ENCODE measurements at regions of chr7 and their contacts with region 1.

Region 1: DNA sequence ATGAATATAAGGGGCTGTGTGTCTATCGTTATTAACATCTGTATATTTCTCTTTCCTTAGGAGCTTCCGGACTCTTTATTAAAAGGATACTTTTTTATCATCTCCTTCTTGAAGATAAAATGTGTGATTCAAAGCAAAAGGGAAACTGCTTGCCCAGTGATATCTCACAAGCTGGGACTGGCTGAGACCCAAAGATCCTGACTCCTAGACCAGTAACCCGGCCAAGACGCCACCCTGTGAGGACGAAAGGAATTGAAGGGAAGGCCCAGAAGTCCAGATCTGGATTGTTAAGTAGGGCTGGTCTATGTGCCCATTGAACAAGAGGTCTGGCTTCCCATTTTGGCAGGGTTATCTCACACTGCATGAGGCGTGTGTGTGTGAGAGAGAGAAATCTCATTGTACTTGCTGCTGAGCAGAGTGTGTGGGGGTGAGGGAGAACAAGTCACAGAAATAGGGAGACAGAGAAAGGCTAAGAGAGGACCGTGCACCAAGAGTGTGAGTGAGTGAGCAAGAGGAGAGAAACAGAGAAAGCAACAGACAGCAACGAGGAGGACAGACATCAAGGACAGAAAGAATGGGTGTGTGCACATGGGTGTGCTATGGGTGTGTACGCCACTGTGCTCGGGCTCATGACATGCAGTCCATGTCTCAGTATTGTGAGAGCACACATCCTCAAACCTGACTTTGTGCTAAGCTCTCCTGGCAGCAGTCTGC is 75.4 kb downstream of the PLXNA4 start:
- DNase-seq: peak; percentile 95
- H3K4me3 ChIP-seq: no peak overlapping the region
- H3K27ac ChIP-seq: peak overlapping the region; percentile 89
- H3K4me1 ChIP-seq: peaks cover 35% of the 10 kb centered on the region
- H3K27me3 ChIP-seq: no peaks in the 10 kb centered on the region
- CTCF ChIP-seq: peak; percentile 70 to 71
- POLR2A ChIP-seq: no peak

Region 2: DNA sequence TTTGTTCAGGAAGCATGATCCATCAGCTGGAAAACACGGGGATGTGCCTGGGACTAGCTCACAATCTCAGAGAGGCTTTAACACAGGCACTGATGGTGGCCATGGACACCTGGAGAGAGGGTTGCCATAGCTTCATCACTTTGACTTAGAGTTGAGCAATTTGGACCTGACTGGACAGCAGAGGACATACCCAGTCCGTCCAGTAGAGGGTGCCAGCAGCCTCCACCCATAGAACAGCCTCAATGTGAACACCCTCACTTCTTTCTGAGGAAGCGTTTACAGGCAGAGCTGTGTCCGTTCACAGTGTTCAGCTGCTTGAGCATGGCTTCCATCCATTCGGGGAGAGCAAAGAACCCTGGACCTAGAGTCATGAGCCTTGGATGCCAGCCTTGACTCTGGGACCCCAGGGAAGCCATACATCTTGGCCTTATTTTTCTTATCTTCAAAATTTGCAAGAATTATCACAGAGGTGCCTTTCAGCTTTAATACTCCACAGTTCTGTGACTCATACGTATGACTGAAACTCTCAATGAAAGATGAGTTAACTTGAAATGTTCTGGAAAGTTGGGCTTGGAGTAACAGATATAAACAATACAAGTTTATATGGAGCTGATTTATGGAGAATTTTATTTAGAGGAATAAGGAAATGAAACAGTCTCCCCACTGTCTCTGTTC is 641.6 kb before region 1 on chr7:
- CTCF ChIA-PET with region 1: interaction called, 4 read pairs
- POLR2A ChIA-PET with region 1: no interaction called
- dilution Hi-C with region 1: no loop called
- intact Hi-C with region 1: loop called (anchors 1 kb)
- DNase-seq: peak; percentile 82
- H3K4me3 ChIP-seq: no peak overlapping the region
- H3K27ac ChIP-seq: no peak overlapping the region
- H3K4me1 ChIP-seq: peaks cover 17% of the 10 kb centered on the region
- H3K27me3 ChIP-seq: peaks cover 5 to 12% of the 10 kb centered on the region in 2 experiments
- CTCF ChIP-seq: peak; percentile 82 to 92
- POLR2A ChIP-seq: no peak

Region 3: GRCh38 chr7:132145466-132145865 is 355.4 kb before region 1 on chr7:
- CTCF ChIA-PET with region 1: no interaction called
- POLR2A ChIA-PET with region 1: no interaction called
- dilution Hi-C with region 1: no loop called
- intact Hi-C with region 1: loop called (anchors 5 kb)
- DNase-seq: peak; percentile 88
- H3K4me3 ChIP-seq: no peak overlapping the region
- H3K27ac ChIP-seq: peak overlapping the region; percentile 49
- H3K4me1 ChIP-seq: peaks cover 8% of the 10 kb centered on the region
- H3K27me3 ChIP-seq: no peaks in the 10 kb centered on the region
- CTCF ChIP-seq: peak in 1 of 2 donors; percentile 18
- POLR2A ChIP-seq: no peak

Region 4: GRCh38 chr7:132351954-132352499 is 148.9 kb before region 1 on chr7:
- CTCF ChIA-PET with region 1: no interaction called
- POLR2A ChIA-PET with region 1: no interaction called
- dilution Hi-C with region 1: no loop called
- intact Hi-C with region 1: no loop called
- DNase-seq: no peak
- H3K4me3 ChIP-seq: no peak overlapping the region
- H3K27ac ChIP-seq: no peak overlapping the region
- H3K4me1 ChIP-seq: peaks cover 12% of the 10 kb centered on the region
- H3K27me3 ChIP-seq: no peaks in the 10 kb centered on the region
- CTCF ChIP-seq: no peak
- POLR2A ChIP-seq: no peak

Region 5: DNA sequence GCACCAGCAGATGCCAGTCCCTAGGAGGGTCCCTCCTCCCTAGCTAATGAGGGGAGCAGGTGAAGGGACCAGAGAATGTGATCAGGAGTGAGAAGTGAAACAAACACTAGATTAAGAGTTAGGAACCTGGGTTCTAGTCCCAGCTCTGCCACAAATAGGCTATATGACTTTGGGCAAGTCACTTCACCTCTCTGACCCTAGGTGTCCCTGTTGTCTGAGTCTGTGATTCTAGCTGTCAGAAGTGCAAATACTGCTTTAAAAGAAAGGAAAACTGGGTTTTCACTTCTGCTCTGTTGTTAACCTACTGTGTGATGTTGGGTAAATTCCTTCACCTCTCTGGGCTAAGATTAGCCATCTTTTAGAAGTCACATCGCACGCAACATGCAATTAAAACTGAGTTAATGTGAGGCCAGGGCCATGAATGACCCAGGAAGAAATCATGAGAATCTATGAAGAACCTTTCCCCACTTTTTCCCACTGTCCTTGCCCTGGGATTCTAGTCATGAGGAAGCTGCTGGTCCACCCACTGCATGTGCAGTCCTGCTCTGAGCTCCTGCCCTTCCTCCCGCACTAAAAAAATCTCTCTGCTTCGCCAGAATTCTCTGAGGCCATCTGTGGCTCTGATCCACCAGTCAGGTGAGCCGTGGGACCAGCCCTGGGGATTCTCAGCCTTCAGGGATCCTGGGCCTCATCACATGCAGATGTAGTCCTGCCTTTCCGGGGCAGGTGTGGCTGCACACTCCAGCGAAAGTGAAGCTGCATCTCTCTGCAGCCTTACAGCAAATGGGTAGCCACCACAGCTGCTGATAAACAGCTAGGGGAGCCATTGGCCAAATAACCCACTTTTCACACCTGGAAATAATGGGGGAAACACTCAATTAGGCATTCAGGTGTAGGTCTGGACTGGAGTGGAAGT is 106.3 kb before region 1 on chr7:
- CTCF ChIA-PET with region 1: interaction called, 19 read pairs
- POLR2A ChIA-PET with region 1: no interaction called
- dilution Hi-C with region 1: no loop called
- intact Hi-C with region 1: loop called (anchors 1 kb)
- DNase-seq: no peak
- H3K4me3 ChIP-seq: no peak overlapping the region
- H3K27ac ChIP-seq: no peak overlapping the region
- H3K4me1 ChIP-seq: peaks cover 5% of the 10 kb centered on the region
- H3K27me3 ChIP-seq: no peaks in the 10 kb centered on the region
- CTCF ChIP-seq: peak; percentile 5 to 14
- POLR2A ChIP-seq: no peak

Region 6: DNA sequence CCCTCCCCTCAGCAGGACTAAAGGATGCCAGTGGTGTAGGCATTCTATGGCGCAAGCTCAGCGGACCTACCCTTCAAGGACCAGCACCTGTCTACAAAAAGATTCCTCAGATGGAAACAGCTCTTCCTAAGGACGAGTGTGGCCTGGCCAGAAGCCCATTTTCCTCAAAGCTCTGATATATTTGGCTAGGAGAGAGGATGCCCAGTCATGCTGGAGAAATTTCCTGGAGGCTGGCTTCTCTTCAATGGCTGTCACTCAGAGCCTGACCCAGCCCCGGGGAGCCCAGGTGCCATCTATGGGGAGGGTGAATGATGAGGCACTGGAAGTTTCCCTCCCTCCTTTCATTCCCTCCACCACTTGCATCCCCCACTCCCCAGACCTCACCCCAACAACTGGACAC is 36.1 kb before region 1 on chr7:
- CTCF ChIA-PET with region 1: interaction called, 4 read pairs
- POLR2A ChIA-PET with region 1: no interaction called
- dilution Hi-C with region 1: no loop called
- intact Hi-C with region 1: loop called (anchors 1 kb)
- DNase-seq: peak; percentile 94
- H3K4me3 ChIP-seq: no peak overlapping the region
- H3K27ac ChIP-seq: peak overlapping the region; percentile 76
- H3K4me1 ChIP-seq: peaks cover 47% of the 10 kb centered on the region
- H3K27me3 ChIP-seq: no peaks in the 10 kb centered on the region
- CTCF ChIP-seq: no peak
- POLR2A ChIP-seq: peak; percentile 44

Region 7: GRCh38 chr7:132557489-132558044 is 56.7 kb after region 1 on chr7:
- CTCF ChIA-PET with region 1: interaction called, 20 read pairs
- POLR2A ChIA-PET with region 1: no interaction called
- dilution Hi-C with region 1: no loop called
- intact Hi-C with region 1: no loop called
- DNase-seq: peak; percentile 31
- H3K4me3 ChIP-seq: no peak overlapping the region
- H3K27ac ChIP-seq: no peak overlapping the region
- H3K4me1 ChIP-seq: no peaks in the 10 kb centered on the region
- H3K27me3 ChIP-seq: no peaks in the 10 kb centered on the region
- CTCF ChIP-seq: no peak
- POLR2A ChIP-seq: no peak

Region 8: DNA sequence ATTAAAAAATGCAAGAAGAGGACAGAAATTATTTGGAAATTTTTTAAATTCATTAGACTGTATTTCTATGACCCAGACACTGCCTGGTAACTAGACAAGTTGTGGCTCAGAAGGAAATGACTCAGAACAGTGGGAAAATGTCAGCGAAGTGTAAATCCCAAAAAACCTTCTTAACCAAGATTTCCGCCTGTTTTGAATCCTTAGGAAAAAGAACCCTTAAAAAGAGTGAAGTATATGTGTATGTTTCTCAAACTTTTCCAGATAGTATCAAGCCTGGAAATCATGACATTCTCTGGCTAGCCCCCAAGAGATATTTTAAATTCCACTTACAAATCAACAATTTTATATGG is 118.0 kb after region 1 on chr7:
- CTCF ChIA-PET with region 1: no interaction called
- POLR2A ChIA-PET with region 1: no interaction called
- dilution Hi-C with region 1: no loop called
- intact Hi-C with region 1: loop called (anchors 1 kb)
- DNase-seq: peak; percentile 86
- H3K4me3 ChIP-seq: no peak overlapping the region
- H3K27ac ChIP-seq: peak overlapping the region; percentile 87
- H3K4me1 ChIP-seq: peaks cover 20% of the 10 kb centered on the region
- H3K27me3 ChIP-seq: peaks cover 0 to 4% of the 10 kb centered on the region in 2 experiments
- CTCF ChIP-seq: no peak
- POLR2A ChIP-seq: no peak